Activated naive CD4-positive, alpha-beta T cell treated with anti-CD3 and anti-CD28 coated beads for 36 hours (primary cell): ENCODE measurements at regions of chr6 and their contacts with region 1.

Region 1: DNA sequence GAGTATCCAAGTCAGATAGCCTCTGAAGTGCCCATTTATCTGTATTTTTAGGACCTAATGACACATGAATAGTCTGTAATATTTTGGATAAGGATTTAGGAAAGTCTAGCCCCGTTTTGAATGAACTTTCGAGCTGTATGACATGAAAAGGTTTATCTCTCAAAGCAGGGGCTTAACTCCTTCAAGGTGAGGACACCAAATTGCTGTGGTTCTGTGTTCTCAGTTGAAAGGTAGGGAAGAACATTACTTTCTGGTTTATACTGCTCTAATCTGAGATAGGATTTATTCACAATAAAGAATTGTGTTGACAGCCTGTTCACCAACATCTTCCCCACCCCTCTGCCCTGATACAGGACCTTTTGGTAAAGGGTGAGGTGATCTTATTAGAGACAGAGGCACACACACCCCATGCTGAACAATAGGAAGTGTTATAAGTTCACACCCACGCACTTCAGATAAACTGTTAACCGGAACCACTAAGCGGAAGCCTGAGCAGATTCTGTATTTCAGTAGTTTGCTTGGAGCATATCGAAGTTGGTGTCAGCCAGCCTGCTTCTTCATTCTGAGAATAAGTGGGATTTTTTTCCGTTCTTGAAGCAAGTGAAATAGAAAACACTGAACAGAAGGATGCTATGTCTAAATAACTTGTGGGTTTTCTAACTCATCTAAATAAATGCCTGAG is 223.3 kb downstream of the TMEM242 start:
- DNase-seq: peak; percentile 80
- H3K4me3 Mint-ChIP-seq: no peak overlapping the region
- H3K27ac Mint-ChIP-seq: peak overlapping the region; percentile 84
- H3K4me1 Mint-ChIP-seq: peaks cover 55% of the 10 kb centered on the region
- H3K27me3 Mint-ChIP-seq: no peaks in the 10 kb centered on the region

Region 2: DNA sequence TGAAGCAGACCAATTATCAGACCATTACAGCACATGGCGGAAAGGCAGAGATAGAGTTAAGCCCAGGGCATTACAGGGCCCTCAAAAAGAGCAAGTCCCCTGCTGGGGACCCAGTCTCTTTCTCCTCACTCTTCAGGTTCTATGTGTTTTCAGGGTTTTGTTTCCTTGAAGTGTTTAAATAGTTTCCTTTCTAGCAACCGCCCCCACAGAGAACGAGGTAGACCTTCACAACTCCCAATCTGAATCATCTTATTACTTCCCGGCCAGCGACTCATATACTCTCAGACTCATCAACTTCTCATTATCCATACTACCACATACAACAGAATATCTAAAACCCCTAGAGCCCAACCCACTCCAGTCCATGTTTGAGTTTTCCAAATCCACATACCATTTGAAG is 849.5 kb before region 1 on chr6:
- CTCF ChIA-PET with region 1: no interaction called
- intact Hi-C with region 1: loop called (anchors 10 kb)
- DNase-seq: peak; percentile 72
- H3K4me3 Mint-ChIP-seq: no peak overlapping the region
- H3K27ac Mint-ChIP-seq: peak overlapping the region; percentile 74
- H3K4me1 Mint-ChIP-seq: peaks cover 29% of the 10 kb centered on the region
- H3K27me3 Mint-ChIP-seq: no peaks in the 10 kb centered on the region

Region 3: DNA sequence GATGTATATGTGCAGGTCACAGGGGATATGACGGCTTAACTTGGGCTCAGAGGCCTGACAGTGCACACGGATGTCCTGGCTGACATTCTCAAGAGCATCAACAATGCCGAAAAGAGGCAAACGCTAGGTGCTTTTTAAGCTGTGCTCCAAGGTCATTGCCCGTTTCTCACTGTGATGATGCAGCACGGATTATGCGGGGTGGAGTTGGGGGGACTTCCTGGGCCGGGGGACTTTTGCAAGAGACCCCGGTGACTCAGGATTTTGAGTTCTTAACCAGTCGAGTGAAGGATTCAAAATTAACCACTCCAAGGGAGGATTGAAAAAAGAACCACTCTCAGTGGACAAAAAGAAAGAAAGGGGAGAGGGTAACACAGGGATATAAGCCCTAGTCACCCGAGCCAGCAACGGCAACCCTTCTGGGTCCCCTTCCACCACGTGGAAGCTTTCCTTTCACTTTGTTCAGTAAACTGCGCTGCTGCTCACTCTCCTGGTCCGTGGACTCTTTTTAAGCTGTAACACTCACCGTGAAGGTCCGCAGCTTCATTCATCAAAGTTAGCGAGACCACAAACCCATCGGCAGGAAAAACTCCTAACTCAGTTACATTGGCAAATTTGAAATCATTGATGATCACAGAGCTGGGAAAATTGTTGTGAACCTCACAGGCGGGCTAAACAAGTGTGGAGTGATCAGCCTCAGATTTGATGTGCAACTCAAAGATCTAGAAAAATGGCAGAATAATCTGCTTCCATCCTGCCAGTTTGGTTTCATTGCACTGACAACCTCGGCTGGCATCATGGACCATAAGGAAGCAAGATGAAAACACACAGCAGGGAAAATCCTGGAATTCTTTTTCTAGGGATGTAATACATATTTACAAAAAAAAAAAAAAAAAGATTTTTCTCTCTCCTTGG is 123.6 kb before region 1 on chr6:
- CTCF ChIA-PET with region 1: no interaction called
- intact Hi-C with region 1: loop called (anchors 5 kb)
- DNase-seq: peak; percentile 48
- H3K4me3 Mint-ChIP-seq: peak overlapping the region; percentile 67
- H3K27ac Mint-ChIP-seq: peak overlapping the region; percentile 63
- H3K4me1 Mint-ChIP-seq: peaks cover 78% of the 10 kb centered on the region
- H3K27me3 Mint-ChIP-seq: no peaks in the 10 kb centered on the region

Region 4: DNA sequence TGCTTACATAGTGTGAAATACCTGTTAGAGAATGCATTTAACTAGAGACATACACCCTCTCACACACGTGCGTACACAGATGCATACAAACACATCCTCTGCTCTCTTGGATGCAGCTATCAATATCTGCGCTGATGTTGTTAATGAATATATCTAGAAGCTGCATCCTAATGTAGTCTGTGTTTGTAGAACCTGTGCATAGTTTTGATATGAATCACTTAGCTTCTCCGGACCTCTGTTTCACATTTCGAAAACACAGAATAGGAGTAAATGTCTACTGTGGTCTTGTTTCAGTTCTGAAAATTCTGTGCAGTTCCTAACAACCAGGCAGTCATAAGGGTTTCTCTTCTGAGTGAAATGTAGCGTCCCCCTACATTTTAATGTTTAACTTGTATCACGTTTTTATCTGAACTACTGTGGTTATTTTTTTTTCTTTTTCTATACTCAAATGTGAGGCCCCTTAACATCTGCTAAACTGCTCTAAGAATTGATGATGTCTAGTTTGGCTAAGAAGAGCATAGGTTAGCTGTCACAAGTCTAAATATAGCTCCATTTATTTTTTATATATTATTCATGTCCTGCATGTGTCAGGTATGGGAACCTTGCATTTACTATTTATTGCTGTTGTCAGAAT is 31.2 kb before region 1 on chr6:
- CTCF ChIA-PET with region 1: interaction called, 4 read pairs
- intact Hi-C with region 1: loop called (anchors 1 kb)
- DNase-seq: no peak
- H3K4me3 Mint-ChIP-seq: no peak overlapping the region
- H3K27ac Mint-ChIP-seq: peak overlapping the region; percentile 22
- H3K4me1 Mint-ChIP-seq: peaks cover 41% of the 10 kb centered on the region
- H3K27me3 Mint-ChIP-seq: no peaks in the 10 kb centered on the region

Region 5: GRCh38 chr6:157148391-157149323 is 48.6 kb after region 1 on chr6:
- CTCF ChIA-PET with region 1: no interaction called
- intact Hi-C with region 1: no loop called
- DNase-seq: no peak
- H3K4me3 Mint-ChIP-seq: no peak overlapping the region
- H3K27ac Mint-ChIP-seq: no peak overlapping the region
- H3K4me1 Mint-ChIP-seq: peaks cover 5% of the 10 kb centered on the region
- H3K27me3 Mint-ChIP-seq: no peaks in the 10 kb centered on the region

Region 6: GRCh38 chr6:157264701-157265100 is 164.6 kb after region 1 on chr6:
- CTCF ChIA-PET with region 1: no interaction called
- intact Hi-C with region 1: no loop called
- DNase-seq: no peak
- H3K4me3 Mint-ChIP-seq: no peak overlapping the region
- H3K27ac Mint-ChIP-seq: no peak overlapping the region
- H3K4me1 Mint-ChIP-seq: no peaks in the 10 kb centered on the region
- H3K27me3 Mint-ChIP-seq: no peaks in the 10 kb centered on the region